ENCODE measurements at regions of chr2 and their contacts with region 1.

Region 1: GRCh38 chr2:207746131-207746530 is 23.6 kb downstream of the FZD5 start:
- DNase-seq: no peak
- H3K4me3 ChIP-seq: no peak overlapping the region
- H3K27ac ChIP-seq: no peak overlapping the region
- H3K4me1 ChIP-seq: peaks cover 0 to 5% (median 0%) of the 10 kb centered on the region in 4 experiments; a peak in 1 of 7 replicates
- H3K27me3 ChIP-seq: no peaks in the 10 kb centered on the region
- CTCF ChIP-seq: peak; percentile 70 to 96 (median 95)
- EP300 ChIP-seq: no peak
- POLR2A ChIP-seq: no peak
- RAD21 ChIP-seq: peak; percentile 100

Region 2: GRCh38 chr2:207662203-207662602 is 83.9 kb before region 1 on chr2:
- CTCF ChIA-PET with region 1: no interaction called
- POLR2A ChIA-PET with region 1: no interaction called
- DNase-seq: no peak
- H3K4me3 ChIP-seq: no peak overlapping the region
- H3K27ac ChIP-seq: no peak overlapping the region
- H3K4me1 ChIP-seq: peaks cover 0 to 5% (median 0%) of the 10 kb centered on the region in 4 experiments; a peak in 2 of 7 replicates
- H3K27me3 ChIP-seq: no peaks in the 10 kb centered on the region
- CTCF ChIP-seq: no peak
- EP300 ChIP-seq: no peak
- POLR2A ChIP-seq: no peak
- RAD21 ChIP-seq: no peak

Region 3: DNA sequence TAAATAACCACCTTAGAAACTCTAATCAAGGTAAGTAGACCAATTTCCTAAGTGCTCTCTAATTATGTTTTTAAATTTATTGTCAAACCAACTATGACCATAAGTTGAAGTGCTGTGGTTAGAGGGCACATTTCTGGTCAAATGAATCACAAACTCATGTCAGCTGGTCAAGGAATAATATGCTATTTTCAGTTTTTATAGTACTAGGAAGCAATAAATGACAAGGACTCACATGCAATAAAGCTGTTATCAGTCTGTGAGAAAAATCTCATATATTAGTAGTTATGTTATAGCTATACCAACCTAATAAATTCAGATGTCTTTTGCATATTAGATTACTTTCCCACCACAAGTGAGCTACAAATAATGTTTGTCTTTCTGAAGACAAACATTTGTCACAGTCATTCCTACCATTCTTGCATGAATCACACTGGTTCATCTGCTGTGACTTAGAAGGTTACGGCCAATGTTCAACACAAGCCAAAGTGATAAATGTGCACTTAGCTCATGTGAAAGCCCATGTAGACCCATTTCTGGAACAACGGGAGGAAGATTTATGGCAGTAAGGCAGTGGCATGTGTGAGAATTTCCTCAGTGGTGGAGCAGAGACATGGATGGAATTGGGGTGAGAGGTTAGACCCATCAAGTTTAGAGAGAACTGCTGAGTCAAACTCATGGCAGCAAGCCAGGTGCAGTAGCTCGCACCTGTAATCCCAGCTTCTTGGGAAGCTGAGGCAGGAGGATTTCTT is 62.1 kb before region 1 on chr2:
- CTCF ChIA-PET with region 1: no interaction called
- POLR2A ChIA-PET with region 1: no interaction called
- DNase-seq: no peak
- H3K4me3 ChIP-seq: no peak overlapping the region
- H3K27ac ChIP-seq: no peak overlapping the region
- H3K4me1 ChIP-seq: no peaks in the 10 kb centered on the region
- H3K27me3 ChIP-seq: no peaks in the 10 kb centered on the region
- CTCF ChIP-seq: no peak
- EP300 ChIP-seq: no peak
- POLR2A ChIP-seq: no peak
- RAD21 ChIP-seq: no peak

Region 4: DNA sequence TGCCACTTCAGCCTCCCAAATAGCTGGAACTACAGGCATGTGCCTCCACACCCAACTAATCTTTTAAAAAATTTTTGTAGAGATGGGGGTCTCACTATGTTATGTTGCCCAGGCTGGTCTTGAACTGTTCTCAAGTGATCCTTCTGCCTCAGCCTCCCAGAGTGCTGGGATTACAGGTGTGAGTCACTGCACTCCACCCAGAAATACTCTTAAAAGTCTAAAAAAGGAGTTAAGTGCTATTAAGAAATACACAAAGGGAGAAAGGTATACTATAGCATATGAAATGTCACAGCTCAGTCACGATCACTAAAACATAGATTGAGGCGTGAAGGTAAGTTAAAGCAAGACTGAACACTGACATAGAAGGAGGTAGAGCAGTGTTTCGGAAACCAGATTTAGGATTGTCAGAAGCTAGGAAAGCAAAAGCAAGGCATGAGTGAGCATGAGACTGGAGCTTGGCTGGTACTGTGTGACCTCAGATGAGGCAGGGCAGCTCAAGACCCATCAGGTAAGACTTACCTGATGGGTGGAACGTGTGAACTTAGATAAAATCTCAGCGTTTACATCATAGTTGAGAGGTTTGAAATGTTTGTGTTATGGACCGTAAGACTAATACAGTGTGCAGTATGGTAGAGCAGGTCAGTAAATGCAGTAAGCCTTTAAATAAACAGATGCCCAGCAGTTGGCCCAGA is 25.5 kb before region 1 on chr2:
- CTCF ChIA-PET with region 1: interaction called, 14 read pairs
- POLR2A ChIA-PET with region 1: interaction called, 3 read pairs
- DNase-seq: no peak
- H3K4me3 ChIP-seq: no peak overlapping the region
- H3K27ac ChIP-seq: no peak overlapping the region
- H3K4me1 ChIP-seq: 0 out of 7 replicates have a peak, but pooled peaks cover 0 to 3% (median 0%) of the 10 kb centered on the region in 4 experiments
- H3K27me3 ChIP-seq: no peaks in the 10 kb centered on the region
- CTCF ChIP-seq: no peak
- EP300 ChIP-seq: no peak
- POLR2A ChIP-seq: no peak
- RAD21 ChIP-seq: no peak

Region 5: DNA sequence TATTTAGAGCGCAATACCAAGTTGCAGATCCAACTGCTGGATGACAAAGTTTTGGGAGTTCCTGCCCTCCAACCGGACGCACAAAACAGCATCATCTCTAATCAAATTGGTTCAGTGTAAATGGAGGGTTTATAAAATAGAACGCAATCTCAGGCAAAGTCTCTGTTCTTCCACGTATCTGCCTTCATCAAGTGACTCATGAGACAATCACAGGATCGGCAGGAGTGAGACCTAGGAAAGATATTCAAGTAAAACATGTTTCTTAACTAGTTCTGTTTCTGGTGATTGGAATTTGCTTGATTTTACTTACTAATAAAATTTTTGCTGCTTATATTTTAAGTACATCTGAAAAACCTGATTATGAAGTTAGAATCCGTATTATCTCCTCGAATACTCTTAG is 16.0 kb after region 1 on chr2:
- CTCF ChIA-PET with region 1: interaction called, 35 read pairs
- POLR2A ChIA-PET with region 1: interaction called, 6 read pairs
- DNase-seq: no peak
- H3K4me3 ChIP-seq: no peak overlapping the region
- H3K27ac ChIP-seq: no peak overlapping the region
- H3K4me1 ChIP-seq: peaks cover 15 to 40% (median 26%) of the 10 kb centered on the region in 4 experiments
- H3K27me3 ChIP-seq: no peaks in the 10 kb centered on the region
- CTCF ChIP-seq: no peak
- EP300 ChIP-seq: no peak
- POLR2A ChIP-seq: no peak
- RAD21 ChIP-seq: no peak

Region 6: DNA sequence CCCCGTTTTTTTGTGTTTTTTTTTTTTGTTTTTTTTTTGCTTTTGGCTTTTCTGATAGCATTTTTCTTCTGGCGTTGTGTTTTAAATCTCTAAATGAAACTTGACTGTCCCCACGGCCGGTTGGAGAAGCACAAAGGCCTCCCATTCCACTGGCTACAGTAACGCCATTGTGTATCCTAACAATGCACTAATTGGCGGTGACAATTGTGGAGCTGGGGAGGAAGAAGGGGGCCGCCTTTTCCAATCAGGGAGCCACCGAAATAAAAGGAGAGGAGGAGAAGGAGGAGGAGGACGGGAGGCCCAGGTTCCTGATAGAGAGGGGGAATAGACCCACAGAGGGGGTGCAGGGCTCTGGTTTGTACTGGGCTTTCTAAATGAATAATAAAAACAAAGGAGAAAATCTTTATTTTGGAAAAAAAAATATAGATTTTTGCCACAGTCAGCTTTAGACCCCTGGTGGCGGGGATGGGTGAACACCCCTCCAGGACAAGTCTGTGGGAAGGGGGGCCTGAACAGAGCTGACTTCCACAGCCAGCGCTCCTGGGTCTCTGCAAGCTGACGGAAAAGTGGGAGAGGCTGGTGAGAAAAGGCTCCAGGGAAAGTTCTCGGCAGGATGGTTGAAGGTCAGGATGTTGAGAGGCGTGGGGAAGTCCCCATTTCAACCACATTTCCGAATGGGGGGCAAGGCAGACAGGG is 67.2 kb after region 1 on chr2:
- CTCF ChIA-PET with region 1: interaction called, 14 read pairs
- POLR2A ChIA-PET with region 1: interaction called, 5 read pairs
- DNase-seq: no peak
- H3K4me3 ChIP-seq: peak overlapping the region in 1 of 4 experiments; percentile 31; a peak in 1 of 8 replicates
- H3K27ac ChIP-seq: no peak overlapping the region
- H3K4me1 ChIP-seq: peaks cover 6 to 30% (median 25%) of the 10 kb centered on the region in 4 experiments; a peak in 6 of 7 replicates
- H3K27me3 ChIP-seq: no peaks in the 10 kb centered on the region
- CTCF ChIP-seq: no peak
- EP300 ChIP-seq: no peak
- POLR2A ChIP-seq: no peak
- RAD21 ChIP-seq: no peak

Region 7: DNA sequence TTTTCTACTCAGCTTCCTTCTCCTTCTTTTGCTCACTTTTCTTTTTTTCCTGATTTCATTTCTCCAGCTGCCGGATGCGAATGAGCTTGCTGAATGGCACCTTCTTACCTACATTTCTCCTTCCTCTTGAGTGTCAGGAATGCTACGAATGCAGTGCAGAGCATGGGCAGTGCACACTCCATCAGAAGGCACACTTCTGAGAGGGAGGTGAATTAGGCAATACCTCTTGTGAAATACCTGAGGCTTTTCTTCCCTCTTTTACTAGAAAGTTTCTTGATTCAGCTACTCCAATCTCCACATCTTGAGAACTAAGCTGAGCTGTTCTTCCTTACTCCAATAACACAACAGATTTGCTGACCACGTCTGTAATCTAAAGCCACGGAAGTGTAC is 228.1 kb after region 1 on chr2:
- CTCF ChIA-PET with region 1: interaction called, 95 read pairs
- POLR2A ChIA-PET with region 1: interaction called, 3 read pairs
- DNase-seq: no peak
- H3K4me3 ChIP-seq: no peak overlapping the region
- H3K27ac ChIP-seq: no peak overlapping the region
- H3K4me1 ChIP-seq: peaks cover 3 to 28% (median 9%) of the 10 kb centered on the region in 4 experiments; a peak in 5 of 7 replicates
- H3K27me3 ChIP-seq: no peaks in the 10 kb centered on the region
- CTCF ChIP-seq: no peak
- EP300 ChIP-seq: no peak
- POLR2A ChIP-seq: no peak
- RAD21 ChIP-seq: no peak

Region 8: DNA sequence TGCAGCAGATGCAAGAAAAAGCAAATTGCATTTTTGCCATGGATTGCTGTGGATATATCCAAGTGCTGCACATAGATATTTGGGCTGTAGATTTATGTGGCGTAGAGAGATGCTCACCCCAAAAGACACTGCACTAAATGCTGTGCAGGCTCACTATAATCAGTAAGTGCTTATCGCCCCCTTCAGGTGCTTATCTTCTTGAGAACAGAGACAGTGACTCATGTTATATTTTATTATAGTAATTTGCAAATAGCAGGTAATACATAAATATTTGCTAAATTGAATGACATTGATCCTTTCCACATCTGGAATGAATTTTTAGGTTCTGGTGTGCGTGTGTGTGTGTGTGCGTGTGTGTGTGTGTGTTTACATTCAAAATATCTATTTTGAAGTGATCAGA is 316.0 kb after region 1 on chr2:
- CTCF ChIA-PET with region 1: interaction called, 29 read pairs
- POLR2A ChIA-PET with region 1: interaction called, 6 read pairs
- DNase-seq: no peak
- H3K4me3 ChIP-seq: no peak overlapping the region
- H3K27ac ChIP-seq: no peak overlapping the region
- H3K4me1 ChIP-seq: no peaks in the 10 kb centered on the region
- H3K27me3 ChIP-seq: no peaks in the 10 kb centered on the region
- CTCF ChIP-seq: peak in 2 of 3 experiments; percentile 48 to 60; a peak in 2 of 4 replicates
- EP300 ChIP-seq: no peak
- POLR2A ChIP-seq: no peak
- RAD21 ChIP-seq: peak; percentile 76 to 78

Region 9: GRCh38 chr2:208156439-208156838 is 410.3 kb after region 1 on chr2:
- CTCF ChIA-PET with region 1: no interaction called
- POLR2A ChIA-PET with region 1: no interaction called
- DNase-seq: no peak
- H3K4me3 ChIP-seq: no peak overlapping the region
- H3K27ac ChIP-seq: no peak overlapping the region
- H3K4me1 ChIP-seq: no peaks in the 10 kb centered on the region
- H3K27me3 ChIP-seq: no peaks in the 10 kb centered on the region
- CTCF ChIP-seq: no peak
- EP300 ChIP-seq: no peak
- POLR2A ChIP-seq: no peak
- RAD21 ChIP-seq: no peak